AG04450 (cell line): ENCODE measurements at regions of chr1 and their contacts with region 1.

Region 1: GRCh38 chr1:42173155-42173933 is 8.8 kb upstream of the GUCA2A start:
- DNase-seq: no peak
- H3K4me3 ChIP-seq: no peak overlapping the region
- H3K27ac ChIP-seq: no peak overlapping the region
- H3K27me3 ChIP-seq: no peaks in the 10 kb centered on the region
- CTCF ChIP-seq: peak; percentile 98

Region 2: DNA sequence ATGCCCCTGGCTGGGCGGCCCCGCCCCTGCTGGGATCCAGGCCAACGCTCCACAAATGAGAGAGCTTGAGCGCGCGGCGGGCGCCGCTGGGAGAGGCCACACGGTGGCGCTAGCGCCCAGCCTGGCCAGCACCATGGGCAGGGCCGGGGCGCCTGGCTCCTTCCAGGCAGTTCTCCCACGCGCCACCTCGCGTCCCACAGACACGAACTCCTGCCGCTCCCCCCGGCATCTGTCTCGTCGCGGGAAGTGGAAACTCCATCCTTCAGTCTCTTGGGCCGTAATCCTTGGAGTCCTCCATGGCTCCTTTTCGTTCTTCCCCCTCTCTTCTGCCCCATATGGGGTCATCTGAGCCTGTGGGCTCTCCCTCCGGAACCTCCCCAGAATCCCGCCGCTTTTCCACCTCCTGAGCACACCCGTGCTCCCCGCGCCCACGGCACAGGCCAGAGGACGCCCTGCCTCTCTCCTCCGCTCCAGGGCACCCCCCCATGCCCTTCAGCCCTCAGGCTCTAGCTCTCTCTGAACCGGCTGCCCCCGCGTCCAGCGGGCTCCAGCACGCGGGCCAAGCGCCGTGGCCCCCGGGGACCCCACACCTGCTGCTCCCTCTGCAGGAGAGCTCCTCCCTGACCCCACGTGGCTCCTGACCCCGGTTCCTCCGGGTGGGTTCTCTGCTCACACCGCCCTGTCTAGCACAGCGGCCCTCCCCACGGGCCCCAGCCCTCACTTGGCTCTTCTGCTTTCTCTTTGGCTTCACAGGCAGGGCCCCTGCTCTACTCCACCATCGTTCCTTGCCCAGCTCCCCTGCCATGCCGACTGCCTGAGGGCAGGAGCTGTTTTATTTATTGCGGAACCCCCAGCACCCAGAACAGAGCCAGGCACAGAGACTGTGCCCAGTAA is 656.9 kb before region 1 on chr1:
- CTCF ChIA-PET with region 1: interaction called, 11 read pairs
- POLR2A ChIA-PET with region 1: no interaction called
- DNase-seq: peak; percentile 34
- H3K4me3 ChIP-seq: peak overlapping the region; percentile 49
- H3K27ac ChIP-seq: no peak overlapping the region
- H3K27me3 ChIP-seq: no peaks in the 10 kb centered on the region
- CTCF ChIP-seq: peak; percentile 89

Region 3: GRCh38 chr1:41936118-41936517 is 237.2 kb before region 1 on chr1:
- CTCF ChIA-PET with region 1: no interaction called
- POLR2A ChIA-PET with region 1: no interaction called
- DNase-seq: no peak
- H3K4me3 ChIP-seq: no peak overlapping the region
- H3K27ac ChIP-seq: no peak overlapping the region
- H3K27me3 ChIP-seq: no peaks in the 10 kb centered on the region
- CTCF ChIP-seq: 0 out of 2 replicates have a peak, but pooled peaks have one; percentile 4

Region 4: DNA sequence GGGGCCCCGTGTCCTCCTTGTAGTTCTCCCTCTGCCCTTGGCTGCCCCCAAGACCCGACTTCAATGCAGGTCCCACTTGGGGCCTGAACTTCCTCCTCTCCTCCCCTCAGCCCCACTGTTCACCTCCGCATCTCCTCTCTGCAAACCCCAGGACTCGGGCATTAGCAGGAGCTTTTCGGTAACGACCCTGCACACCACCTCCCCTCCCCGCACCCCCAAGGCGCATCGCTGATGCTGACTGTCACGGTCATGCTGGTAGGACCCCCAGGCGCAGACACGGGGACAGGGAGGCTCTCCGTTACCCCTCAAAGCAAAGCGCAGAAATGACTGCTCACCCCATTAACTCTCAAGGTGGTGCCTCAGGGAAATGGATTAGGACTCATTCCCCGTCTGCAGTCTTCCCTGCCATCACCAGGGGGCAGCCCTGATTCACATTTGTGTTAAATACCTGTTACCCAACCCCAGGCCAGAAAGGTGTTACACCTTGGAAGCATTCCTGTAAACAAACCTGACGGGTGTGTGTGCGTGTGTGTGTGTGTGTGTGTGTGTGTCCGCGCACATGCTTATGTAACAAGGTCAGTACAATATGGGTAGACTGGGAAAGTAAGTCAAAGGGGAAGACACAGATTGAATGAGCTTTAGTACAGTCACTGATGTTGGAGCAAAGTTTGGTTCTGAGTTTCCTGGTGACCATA is 26.6 kb before region 1 on chr1:
- CTCF ChIA-PET with region 1: interaction called, 22 read pairs
- POLR2A ChIA-PET with region 1: no interaction called
- DNase-seq: no peak
- H3K4me3 ChIP-seq: no peak overlapping the region
- H3K27ac ChIP-seq: no peak overlapping the region
- H3K27me3 ChIP-seq: peaks cover 38% of the 10 kb centered on the region
- CTCF ChIP-seq: peak; percentile 87

Region 5: DNA sequence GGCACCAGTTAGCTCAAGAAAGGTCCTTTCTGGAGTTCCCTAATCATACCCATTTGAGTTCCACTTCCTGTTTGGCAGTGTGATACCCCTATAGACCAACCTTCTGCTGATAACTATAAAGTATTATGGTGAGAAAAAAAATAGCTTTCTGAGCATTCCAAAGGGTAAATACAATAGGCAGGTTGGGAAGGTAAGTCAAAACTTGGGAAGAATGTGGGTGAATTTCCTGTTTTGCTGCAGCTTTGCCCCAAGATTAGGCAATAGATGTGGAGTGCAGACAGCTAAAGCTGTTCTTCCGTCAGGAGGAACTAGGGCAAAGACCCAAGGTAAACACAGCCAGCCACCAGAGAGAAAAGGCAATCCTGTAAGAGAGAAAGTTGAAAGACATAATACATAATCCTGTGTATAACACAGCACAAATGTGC is 41.1 kb after region 1 on chr1:
- CTCF ChIA-PET with region 1: interaction called, 19 read pairs
- POLR2A ChIA-PET with region 1: no interaction called
- DNase-seq: no peak
- H3K4me3 ChIP-seq: no peak overlapping the region
- H3K27ac ChIP-seq: no peak overlapping the region
- H3K27me3 ChIP-seq: no peaks in the 10 kb centered on the region
- CTCF ChIP-seq: no peak

Region 6: GRCh38 chr1:42334240-42335049 is 161.1 kb after region 1 on chr1:
- CTCF ChIA-PET with region 1: interaction called, 18 read pairs
- POLR2A ChIA-PET with region 1: no interaction called
- DNase-seq: no peak
- H3K4me3 ChIP-seq: peak overlapping the region; percentile 94
- H3K27ac ChIP-seq: peak overlapping the region; percentile 71
- H3K27me3 ChIP-seq: no peaks in the 10 kb centered on the region
- CTCF ChIP-seq: no peak

Region 7: DNA sequence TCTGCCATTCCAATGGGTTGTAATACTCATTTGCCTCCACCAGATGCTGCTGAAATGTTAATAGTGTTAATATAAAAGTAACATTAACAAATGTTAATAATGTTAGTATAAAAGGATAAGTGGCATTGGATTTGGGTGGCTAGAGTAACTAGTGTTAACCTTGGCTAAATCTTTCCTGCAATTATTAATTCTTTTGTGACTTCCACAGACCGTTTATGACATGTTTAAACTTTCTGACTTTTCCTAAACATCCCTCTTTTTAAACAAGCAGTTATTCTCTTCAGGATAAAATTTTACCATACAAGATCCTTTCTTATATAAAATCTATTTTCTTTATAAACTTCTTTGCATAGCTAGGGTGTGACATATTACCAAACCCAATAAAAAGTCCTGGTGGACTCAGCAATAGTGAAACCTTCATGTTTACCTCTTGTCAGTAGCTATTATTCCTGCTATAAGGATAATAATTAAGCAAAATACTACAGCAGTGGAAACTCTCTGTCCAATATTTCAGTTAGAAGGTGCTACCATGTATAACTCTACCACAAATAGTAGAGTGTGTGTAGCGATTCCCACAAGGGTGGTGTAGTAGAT is 331.3 kb after region 1 on chr1:
- CTCF ChIA-PET with region 1: no interaction called
- POLR2A ChIA-PET with region 1: no interaction called
- DNase-seq: no peak
- H3K4me3 ChIP-seq: no peak overlapping the region
- H3K27ac ChIP-seq: no peak overlapping the region
- H3K27me3 ChIP-seq: no peaks in the 10 kb centered on the region
- CTCF ChIP-seq: no peak